ENCODE measurements at regions of chr7 and their contacts with region 1.

Region 1: GRCh38 chr7:75866489-75867389 is 12.1 kb upstream of the RHBDD2 start:
- DNase-seq: peak; percentile 45 to 63
- H3K4me3 ChIP-seq: no peak overlapping the region
- H3K27ac ChIP-seq: no peak overlapping the region
- H3K4me1 ChIP-seq: peaks cover 13% of the 10 kb centered on the region
- H3K27me3 ChIP-seq: no peaks in the 10 kb centered on the region
- CTCF ChIP-seq: peak; percentile 90

Region 2: GRCh38 chr7:75982306-75983069 is 115.7 kb after region 1 on chr7:
- CTCF ChIA-PET with region 1: no interaction called
- POLR2A ChIA-PET with region 1: interaction called, 18 read pairs
- intact Hi-C with region 1: no loop called
- DNase-seq: no peak
- H3K4me3 ChIP-seq: no peak overlapping the region
- H3K27ac ChIP-seq: no peak overlapping the region
- H3K4me1 ChIP-seq: no peaks in the 10 kb centered on the region
- H3K27me3 ChIP-seq: no peaks in the 10 kb centered on the region
- CTCF ChIP-seq: no peak

Region 3: GRCh38 chr7:76020031-76020714 is 153.4 kb after region 1 on chr7:
- CTCF ChIA-PET with region 1: interaction called, 17 read pairs
- POLR2A ChIA-PET with region 1: no interaction called
- intact Hi-C with region 1: loop called (anchors 1 kb)
- DNase-seq: peak; percentile 51 to 78
- H3K4me3 ChIP-seq: no peak overlapping the region
- H3K27ac ChIP-seq: no peak overlapping the region
- H3K4me1 ChIP-seq: no peaks in the 10 kb centered on the region
- H3K27me3 ChIP-seq: no peaks in the 10 kb centered on the region
- CTCF ChIP-seq: peak; percentile 88

Region 4: DNA sequence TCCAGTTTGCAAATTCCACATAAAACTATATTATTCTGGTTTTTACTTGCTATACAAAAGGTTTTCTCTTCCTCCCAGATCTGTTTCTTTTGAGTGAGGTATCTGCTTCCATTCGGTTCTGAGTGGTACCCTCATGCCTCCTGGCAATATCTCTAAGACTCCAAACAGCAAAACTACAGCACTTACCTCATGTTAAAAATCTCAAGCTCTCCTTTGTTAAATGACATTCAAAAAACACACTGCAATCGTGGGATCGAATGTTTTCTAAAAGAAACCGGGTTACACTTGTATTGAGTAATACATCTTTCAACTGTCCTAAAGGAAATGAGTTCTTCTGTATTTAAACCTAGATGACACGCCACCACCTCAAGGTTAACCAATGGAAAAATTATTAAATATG is 481.0 kb after region 1 on chr7:
- CTCF ChIA-PET with region 1: no interaction called
- POLR2A ChIA-PET with region 1: interaction called, 15 read pairs
- intact Hi-C with region 1: no loop called
- DNase-seq: no peak
- H3K4me3 ChIP-seq: no peak overlapping the region
- H3K27ac ChIP-seq: no peak overlapping the region
- H3K4me1 ChIP-seq: peaks cover 16% of the 10 kb centered on the region
- H3K27me3 ChIP-seq: no peaks in the 10 kb centered on the region
- CTCF ChIP-seq: no peak

Measured in PC-9 (cell line).